Activated T-helper 1 cell treated with anti-CD3 and anti-CD28 coated beads, Interleukin-12 subunit alpha, Interleukin-12 subunit beta, Interleukin-2, Interleukin-4 antibody, amounts not matched to agents 30 ng/mL and 10 ng/mL and 1 ng/mL, durations not matched to agents 14 hours and 24 hours and 36 hours (primary cell): ENCODE measurements at regions of chr6 and their contacts with region 1.

Region 1: GRCh38 chr6:109187399-109188114 is 92.2 kb downstream of the CEP57L1 start:
- DNase-seq: peak; percentile 25
- H3K4me3 Mint-ChIP-seq: no peak overlapping the region
- H3K27ac Mint-ChIP-seq: no peak overlapping the region
- H3K4me1 Mint-ChIP-seq: no peaks in the 10 kb centered on the region
- H3K27me3 Mint-ChIP-seq: peaks cover 39% of the 10 kb centered on the region

Region 2: GRCh38 chr6:107218142-107218541 is 1969.4 kb before region 1 on chr6:
- intact Hi-C with region 1: no loop called
- DNase-seq: no peak
- H3K4me3 Mint-ChIP-seq: no peak overlapping the region
- H3K27ac Mint-ChIP-seq: no peak overlapping the region
- H3K4me1 Mint-ChIP-seq: no peaks in the 10 kb centered on the region
- H3K27me3 Mint-ChIP-seq: no peaks in the 10 kb centered on the region

Region 3: DNA sequence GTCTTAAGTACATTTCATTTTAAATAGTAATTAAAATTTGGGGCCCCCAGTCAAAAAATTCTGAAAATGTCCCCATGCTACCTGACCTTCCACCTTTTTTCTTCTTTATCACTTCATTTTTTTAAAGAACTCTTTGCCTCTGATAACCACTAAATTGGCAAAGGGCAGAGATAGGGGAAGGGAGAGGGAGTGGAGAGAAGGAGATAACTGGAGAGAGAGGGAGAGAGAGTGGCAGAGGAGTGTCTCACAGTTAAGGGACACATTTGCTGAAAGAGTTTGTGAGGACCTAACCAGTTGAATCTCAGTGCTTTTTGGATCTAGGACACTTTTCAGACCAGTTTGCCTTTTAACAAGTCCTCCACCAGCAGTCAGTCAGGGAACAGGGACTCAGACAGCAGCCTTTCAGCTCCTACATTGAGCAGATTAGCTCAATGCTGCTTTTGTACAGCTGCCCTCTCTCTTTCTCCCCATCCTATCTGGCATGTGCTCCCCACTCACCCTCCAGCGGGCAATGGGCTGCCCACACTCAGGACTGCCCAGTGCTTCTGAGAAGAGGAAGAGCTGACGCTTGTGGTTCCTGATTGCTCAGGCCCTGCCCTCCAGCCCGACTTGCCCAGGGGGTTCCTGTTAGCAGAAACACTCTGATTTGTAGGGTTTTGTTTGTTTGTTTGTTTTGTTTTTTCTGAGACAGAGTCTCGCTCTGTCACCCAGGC is 324.9 kb before region 1 on chr6:
- intact Hi-C with region 1: no loop called
- DNase-seq: no peak
- H3K4me3 Mint-ChIP-seq: no peak overlapping the region
- H3K27ac Mint-ChIP-seq: no peak overlapping the region
- H3K4me1 Mint-ChIP-seq: peaks cover 11% of the 10 kb centered on the region
- H3K27me3 Mint-ChIP-seq: peaks cover 15% of the 10 kb centered on the region

Region 4: DNA sequence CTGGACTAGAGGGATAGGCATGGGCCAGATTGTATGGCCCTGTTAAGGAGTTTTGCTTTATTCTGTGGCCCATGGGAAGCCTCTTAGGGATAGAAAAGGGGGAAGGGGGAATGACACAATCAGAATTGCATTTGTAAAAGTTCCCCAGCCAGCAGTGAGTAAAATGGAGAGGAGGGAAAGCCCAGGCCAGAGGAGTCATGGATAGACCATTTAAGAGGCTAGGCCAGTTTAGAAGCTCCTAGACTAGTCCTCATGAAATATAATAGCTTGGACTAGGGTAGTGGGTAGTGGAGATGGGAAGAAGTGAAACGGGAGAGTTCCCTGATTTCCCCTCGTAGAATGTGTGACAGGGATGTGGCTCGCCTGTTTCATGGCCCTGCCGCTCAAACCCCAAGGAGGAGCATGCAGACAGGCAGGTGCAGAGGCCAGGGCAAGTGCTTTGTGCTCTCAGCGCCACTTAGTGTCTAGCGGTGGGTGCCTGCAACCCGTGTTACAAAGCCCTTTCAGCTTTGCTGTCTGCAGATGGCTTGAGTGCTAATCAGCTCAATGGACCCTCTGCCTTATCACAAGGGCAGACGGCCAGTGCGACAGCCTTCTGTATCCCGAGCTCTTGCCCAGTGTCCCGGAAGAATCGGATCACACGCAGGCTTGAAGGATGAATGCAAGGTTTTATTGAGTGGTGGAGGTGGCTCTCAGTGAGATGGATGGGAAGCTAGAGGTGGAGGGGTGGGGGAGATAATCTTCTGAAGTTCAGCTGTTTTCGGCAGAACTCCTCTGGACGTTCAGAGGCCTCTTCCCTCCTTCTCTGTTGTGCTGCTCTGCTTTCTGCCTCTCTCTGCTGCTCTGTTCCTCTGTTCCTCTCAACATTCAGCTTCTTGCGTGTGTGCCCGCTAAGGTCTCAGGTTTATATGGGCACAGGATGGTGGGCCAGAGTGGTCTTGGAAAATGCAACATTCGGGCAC is 48.8 kb after region 1 on chr6:
- intact Hi-C with region 1: loop called (anchors 1 kb)
- DNase-seq: peak; percentile 31
- H3K4me3 Mint-ChIP-seq: peak overlapping the region; percentile 31
- H3K27ac Mint-ChIP-seq: peak overlapping the region; percentile 37
- H3K4me1 Mint-ChIP-seq: peaks cover 25% of the 10 kb centered on the region
- H3K27me3 Mint-ChIP-seq: no peaks in the 10 kb centered on the region

Region 5: GRCh38 chr6:109440331-109441068 is 252.9 kb after region 1 on chr6 and contains the starts of genes PPIL6 and SMPD2:
- intact Hi-C with region 1: loop called (anchors 1 kb)
- DNase-seq: peak; percentile 79
- H3K4me3 Mint-ChIP-seq: peak within 1 kb of the TSS; percentile 88
- H3K27ac Mint-ChIP-seq: peak within 1 kb of the TSS; percentile 91
- H3K4me1 Mint-ChIP-seq: peaks cover 23% of the 10 kb centered on the region
- H3K27me3 Mint-ChIP-seq: peaks cover 5% of the 10 kb centered on the region
- total RNA-seq, gene PPIL6: 0.13 and 0.29 TPM in 2 replicates
- total RNA-seq, gene SMPD2: 18.5 and 19.1 TPM in 2 replicates

Region 6: GRCh38 chr6:109526905-109527628 is 339.5 kb after region 1 on chr6:
- intact Hi-C with region 1: loop called (anchors 5 kb)
- DNase-seq: peak; percentile 35
- H3K4me3 Mint-ChIP-seq: no peak overlapping the region
- H3K27ac Mint-ChIP-seq: no peak overlapping the region
- H3K4me1 Mint-ChIP-seq: no peaks in the 10 kb centered on the region
- H3K27me3 Mint-ChIP-seq: peaks cover 5% of the 10 kb centered on the region

Region 7: GRCh38 chr6:110398778-110399177 is 1211.2 kb after region 1 on chr6:
- intact Hi-C with region 1: loop called (anchors 10 kb)
- DNase-seq: no peak
- H3K4me3 Mint-ChIP-seq: no peak overlapping the region
- H3K27ac Mint-ChIP-seq: no peak overlapping the region
- H3K4me1 Mint-ChIP-seq: no peaks in the 10 kb centered on the region
- H3K27me3 Mint-ChIP-seq: no peaks in the 10 kb centered on the region